Esophagus muscularis mucosa (tissue), 4 donors: ENCODE measurements at regions of chr20 and their contacts with region 1.

Region 1: GRCh38 chr20:37192137-37192854 is 12.9 kb upstream of the MROH8 start:
- DNase-seq: peak; percentile 95
- H3K4me3 ChIP-seq: no peak overlapping the region
- H3K27ac ChIP-seq: peak overlapping the region in 1 of 4 donors; percentile 18
- H3K4me1 ChIP-seq: peaks cover 33 to 69% (median 67%) of the 10 kb centered on the region in 4 donors
- H3K27me3 ChIP-seq: no peaks in the 10 kb centered on the region
- CTCF ChIP-seq: peak; percentile 91 to 94 (median 93)
- EP300 ChIP-seq: no peak
- POLR2A ChIP-seq: no peak

Region 2: GRCh38 chr20:37276494-37277252 is 84.4 kb after region 1 on chr20:
- intact Hi-C with region 1: loop called (anchors 10 kb)
- DNase-seq: no peak
- H3K4me3 ChIP-seq: peak overlapping the region in 1 of 4 donors; percentile 0
- H3K27ac ChIP-seq: peak overlapping the region in 3 of 4 donors; percentile 21 to 55 (median 42)
- H3K4me1 ChIP-seq: peaks cover 9 to 16% (median 12%) of the 10 kb centered on the region in 4 donors
- H3K27me3 ChIP-seq: no peaks in the 10 kb centered on the region
- CTCF ChIP-seq: peak; percentile 10 to 37 (median 31)
- EP300 ChIP-seq: no peak
- POLR2A ChIP-seq: no peak

Region 3: GRCh38 chr20:37627060-37627769 is 434.9 kb after region 1 on chr20:
- intact Hi-C with region 1: no loop called
- DNase-seq: no peak
- H3K4me3 ChIP-seq: no peak overlapping the region
- H3K27ac ChIP-seq: no peak overlapping the region
- H3K4me1 ChIP-seq: no peaks in the 10 kb centered on the region
- H3K27me3 ChIP-seq: peaks cover 0 to 56% (median 0%) of the 10 kb centered on the region in 4 donors
- CTCF ChIP-seq: no peak
- EP300 ChIP-seq: no peak
- POLR2A ChIP-seq: no peak